Ascending aorta (tissue), 2 donors: ENCODE measurements at regions of chr16 and their contacts with region 1.

Region 1: DNA sequence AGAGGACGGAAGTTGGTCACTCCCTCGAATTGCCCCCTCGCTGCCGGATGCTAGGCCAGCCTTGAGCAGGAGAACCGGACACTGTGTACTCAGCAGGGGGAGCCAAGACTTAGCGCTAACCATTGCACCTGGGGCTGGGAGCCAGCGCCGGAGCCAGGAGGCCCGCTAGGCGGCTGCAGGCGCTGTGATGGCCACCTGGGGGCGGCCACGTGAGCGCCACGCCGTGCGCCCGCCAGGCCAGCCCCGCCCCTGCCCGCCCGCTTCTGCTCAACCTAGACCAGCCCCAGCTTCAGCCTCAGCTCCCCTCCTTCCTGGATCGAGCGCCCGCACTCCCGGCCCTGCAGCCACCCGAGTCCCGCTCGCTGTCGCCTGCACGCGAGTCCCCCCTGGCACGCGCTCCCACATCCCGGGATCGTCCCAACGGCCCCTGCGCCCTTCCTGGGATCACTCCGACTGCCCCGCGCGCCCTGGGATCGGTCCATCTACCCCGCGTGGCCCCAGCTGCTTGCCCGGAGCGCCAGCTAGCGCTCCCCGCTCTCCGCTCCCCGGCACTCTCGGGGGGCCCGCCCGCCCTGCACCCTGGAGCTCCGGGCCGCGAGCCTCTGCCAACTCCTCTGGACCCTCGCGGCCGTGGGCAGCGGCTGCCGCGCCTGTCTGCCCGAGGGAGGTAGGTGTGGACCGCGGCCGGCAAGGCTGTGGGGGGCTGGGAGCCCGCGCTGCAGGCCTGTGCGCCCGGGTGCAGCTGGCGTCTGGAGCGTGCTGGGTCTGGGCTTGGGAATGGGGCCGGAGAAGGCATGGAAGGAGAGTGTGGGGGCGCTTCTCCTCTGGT is at the start of gene EEF2K:
- DNase-seq: peak; percentile 79 to 97
- H3K4me3 ChIP-seq: peak within 1 kb of the TSS; percentile 74 to 85
- H3K27ac ChIP-seq: peak within 1 kb of the TSS; percentile 87 to 88
- H3K4me1 ChIP-seq: peaks cover 3 to 44% of the 10 kb centered on the region in 2 donors
- H3K27me3 ChIP-seq: no peaks in the 10 kb centered on the region
- CTCF ChIP-seq: peak; percentile 70 to 98 (median 84)
- total RNA-seq, gene EEF2K: 31.9 TPM

Region 2: GRCh38 chr16:22143343-22143742 is 62.9 kb before region 1 on chr16:
- intact Hi-C with region 1: no loop called
- DNase-seq: no peak
- H3K4me3 ChIP-seq: no peak overlapping the region
- H3K27ac ChIP-seq: no peak overlapping the region
- H3K4me1 ChIP-seq: no peaks in the 10 kb centered on the region
- H3K27me3 ChIP-seq: no peaks in the 10 kb centered on the region
- CTCF ChIP-seq: no peak

Region 3: DNA sequence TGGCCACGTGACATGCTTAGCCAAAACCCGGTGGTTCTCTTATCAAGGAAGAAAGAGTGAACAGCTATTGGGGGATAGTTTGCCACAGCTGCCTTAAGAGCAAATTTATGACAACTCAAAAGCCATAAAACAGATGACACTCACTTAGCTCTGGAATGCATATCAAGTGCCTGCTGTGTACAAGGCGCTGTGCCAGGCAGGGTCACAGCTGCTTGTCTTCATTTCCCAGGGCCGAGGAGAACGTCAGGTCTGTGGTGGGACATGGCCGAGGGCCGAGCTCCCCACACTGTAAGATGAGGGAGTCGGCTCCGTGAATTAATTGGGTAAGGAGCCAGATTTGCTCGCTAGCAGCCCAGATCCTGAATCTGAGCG is 13.8 kb after region 1 on chr16:
- intact Hi-C with region 1: loop called (anchors 2 kb)
- DNase-seq: no peak
- H3K4me3 ChIP-seq: no peak overlapping the region
- H3K27ac ChIP-seq: peak overlapping the region; percentile 79 to 82
- H3K4me1 ChIP-seq: peaks cover 6 to 38% of the 10 kb centered on the region in 2 donors
- H3K27me3 ChIP-seq: no peaks in the 10 kb centered on the region
- CTCF ChIP-seq: no peak

Region 4: GRCh38 chr16:22235839-22236745 is 29.9 kb after region 1 on chr16:
- intact Hi-C with region 1: loop called (anchors 1 kb)
- DNase-seq: no peak
- H3K4me3 ChIP-seq: no peak overlapping the region
- H3K27ac ChIP-seq: peak overlapping the region; percentile 22 to 38
- H3K4me1 ChIP-seq: peaks cover 4 to 15% of the 10 kb centered on the region in 2 donors
- H3K27me3 ChIP-seq: no peaks in the 10 kb centered on the region
- CTCF ChIP-seq: no peak

Region 5: DNA sequence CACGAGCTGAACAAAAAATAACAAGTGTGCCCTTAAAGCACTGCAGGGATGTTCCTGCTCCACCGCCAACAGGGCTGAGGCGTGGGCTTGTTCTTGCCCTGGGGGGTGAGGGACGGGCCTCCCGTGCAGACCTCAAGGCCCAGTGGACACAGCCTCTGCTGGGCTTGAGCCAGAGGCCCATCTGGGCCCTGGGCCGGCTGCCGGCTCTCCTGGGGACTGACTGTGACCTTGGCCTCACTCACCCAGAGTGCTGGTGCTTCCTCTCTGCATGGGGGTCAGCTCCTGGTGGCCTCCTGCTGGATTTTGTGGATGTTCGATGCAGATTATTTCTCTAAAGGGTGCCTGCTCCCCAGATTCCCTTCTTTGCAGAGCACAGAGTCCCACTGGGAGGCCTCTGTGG is 222.4 kb after region 1 on chr16:
- intact Hi-C with region 1: no loop called
- DNase-seq: no peak
- H3K4me3 ChIP-seq: no peak overlapping the region
- H3K27ac ChIP-seq: no peak overlapping the region
- H3K4me1 ChIP-seq: peaks cover 2 to 15% of the 10 kb centered on the region in 2 donors
- H3K27me3 ChIP-seq: no peaks in the 10 kb centered on the region
- CTCF ChIP-seq: no peak